CD8-positive, alpha-beta T cell (primary cell): ENCODE measurements at regions of chr4 and their contacts with region 1.

Region 1: DNA sequence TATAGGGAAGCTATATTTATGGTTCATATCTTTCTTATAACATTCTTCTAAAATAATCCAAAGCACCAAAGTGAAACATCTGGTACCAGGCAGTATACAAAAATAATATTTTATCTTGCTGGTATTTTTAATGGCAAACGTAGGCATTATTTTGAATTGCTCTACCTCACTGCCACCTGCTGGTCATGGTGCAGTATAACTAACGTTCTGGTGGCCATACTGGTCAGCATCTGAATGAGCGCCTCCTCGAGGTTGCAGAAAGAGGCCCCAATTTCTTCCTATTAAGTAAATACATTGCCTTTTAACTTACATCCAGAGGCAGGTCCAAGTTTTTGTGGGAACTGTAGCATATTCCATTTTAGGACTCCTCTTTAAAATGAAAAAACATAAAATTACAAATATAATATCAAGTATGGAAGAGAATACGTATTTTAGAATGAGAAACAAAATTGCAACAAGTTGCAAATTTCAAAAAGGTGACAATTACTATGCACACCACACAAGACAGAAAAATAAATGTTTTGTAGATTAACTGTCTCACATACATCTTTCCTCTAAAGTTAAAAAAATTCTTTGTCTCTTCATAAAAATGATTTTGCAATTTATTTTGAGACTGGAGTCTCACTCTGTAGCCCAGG is 22.9 kb upstream of the CWH43 start:
- DNase-seq: peak; percentile 53 to 88 (median 75)
- ATAC-seq: peak; percentile 99
- H3K4me3 ChIP-seq: no peak overlapping the region
- H3K4me3 Mint-ChIP-seq: no peak overlapping the region
- H3K27ac ChIP-seq: no peak overlapping the region
- H3K27ac Mint-ChIP-seq: no peak overlapping the region
- H3K4me1 ChIP-seq: no peaks in the 10 kb centered on the region
- H3K4me1 Mint-ChIP-seq: peaks cover 2% of the 10 kb centered on the region
- H3K27me3 ChIP-seq: no peaks in the 10 kb centered on the region
- H3K27me3 Mint-ChIP-seq: no peaks in the 10 kb centered on the region
- CTCF ChIP-seq: peak; percentile 99

Region 2: GRCh38 chr4:48315728-48316630 is 647.2 kb before region 1 on chr4:
- CTCF ChIA-PET with region 1: no interaction called
- POLR2A ChIA-PET with region 1: no interaction called
- intact Hi-C with region 1: loop called in 1 of 2 experiments (anchors 2 kb)
- DNase-seq: peak in 4 of 9 experiments; percentile 16 to 67 (median 38)
- ATAC-seq: no peak
- H3K4me3 ChIP-seq: no peak overlapping the region
- H3K4me3 Mint-ChIP-seq: no peak overlapping the region
- H3K27ac ChIP-seq: no peak overlapping the region
- H3K27ac Mint-ChIP-seq: no peak overlapping the region
- H3K4me1 ChIP-seq: no peaks in the 10 kb centered on the region
- H3K4me1 Mint-ChIP-seq: no peaks in the 10 kb centered on the region
- H3K27me3 ChIP-seq: no peaks in the 10 kb centered on the region
- H3K27me3 Mint-ChIP-seq: no peaks in the 10 kb centered on the region
- CTCF ChIP-seq: peak; percentile 63

Region 3: DNA sequence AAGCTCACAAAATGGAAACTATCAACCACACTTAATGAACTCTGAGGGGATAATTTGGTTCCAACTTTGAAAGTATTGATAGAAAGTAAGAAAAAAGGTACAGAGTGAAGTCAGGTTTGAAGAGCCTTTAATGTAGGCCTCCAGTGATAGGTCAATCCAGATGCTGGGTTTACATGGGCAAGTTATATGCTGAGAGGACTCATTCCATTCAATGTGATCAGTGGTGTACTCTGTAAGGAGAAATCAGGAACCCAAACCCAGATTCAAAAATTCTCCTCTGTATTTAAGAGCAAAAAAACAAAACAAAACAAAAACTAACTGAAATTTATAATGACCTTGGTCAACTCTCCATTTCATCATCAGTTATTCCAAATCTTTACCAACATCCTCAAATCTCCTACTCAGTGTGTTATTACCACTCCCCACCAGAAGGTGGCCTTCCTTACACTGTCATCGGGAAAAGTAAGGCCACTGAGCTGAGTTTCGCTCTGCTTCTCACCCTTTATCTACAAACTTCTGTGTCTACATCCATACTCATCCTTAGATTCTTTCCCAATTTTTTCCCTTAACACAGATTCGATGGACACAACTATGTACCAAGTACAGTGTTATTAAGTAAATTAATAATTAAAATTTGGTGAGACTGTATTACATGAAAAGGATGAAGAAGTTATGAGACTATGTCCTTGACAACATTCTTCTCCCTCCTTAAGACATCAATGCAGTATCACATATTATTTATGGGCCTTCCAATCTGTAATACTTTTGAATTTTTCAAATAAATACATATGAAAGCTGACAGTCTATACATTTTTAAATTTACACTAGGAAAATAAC is 384.8 kb before region 1 on chr4:
- CTCF ChIA-PET with region 1: interaction called, 82 read pairs
- POLR2A ChIA-PET with region 1: no interaction called
- intact Hi-C with region 1: loop called (anchors 1 kb)
- DNase-seq: peak in 8 of 9 experiments; percentile 9 to 78 (median 48)
- ATAC-seq: peak; percentile 98
- H3K4me3 ChIP-seq: no peak overlapping the region
- H3K4me3 Mint-ChIP-seq: no peak overlapping the region
- H3K27ac ChIP-seq: no peak overlapping the region
- H3K27ac Mint-ChIP-seq: peak overlapping the region; percentile 7
- H3K4me1 ChIP-seq: no peaks in the 10 kb centered on the region
- H3K4me1 Mint-ChIP-seq: peaks cover 3% of the 10 kb centered on the region
- H3K27me3 ChIP-seq: no peaks in the 10 kb centered on the region
- H3K27me3 Mint-ChIP-seq: no peaks in the 10 kb centered on the region
- CTCF ChIP-seq: peak; percentile 87

Region 4: DNA sequence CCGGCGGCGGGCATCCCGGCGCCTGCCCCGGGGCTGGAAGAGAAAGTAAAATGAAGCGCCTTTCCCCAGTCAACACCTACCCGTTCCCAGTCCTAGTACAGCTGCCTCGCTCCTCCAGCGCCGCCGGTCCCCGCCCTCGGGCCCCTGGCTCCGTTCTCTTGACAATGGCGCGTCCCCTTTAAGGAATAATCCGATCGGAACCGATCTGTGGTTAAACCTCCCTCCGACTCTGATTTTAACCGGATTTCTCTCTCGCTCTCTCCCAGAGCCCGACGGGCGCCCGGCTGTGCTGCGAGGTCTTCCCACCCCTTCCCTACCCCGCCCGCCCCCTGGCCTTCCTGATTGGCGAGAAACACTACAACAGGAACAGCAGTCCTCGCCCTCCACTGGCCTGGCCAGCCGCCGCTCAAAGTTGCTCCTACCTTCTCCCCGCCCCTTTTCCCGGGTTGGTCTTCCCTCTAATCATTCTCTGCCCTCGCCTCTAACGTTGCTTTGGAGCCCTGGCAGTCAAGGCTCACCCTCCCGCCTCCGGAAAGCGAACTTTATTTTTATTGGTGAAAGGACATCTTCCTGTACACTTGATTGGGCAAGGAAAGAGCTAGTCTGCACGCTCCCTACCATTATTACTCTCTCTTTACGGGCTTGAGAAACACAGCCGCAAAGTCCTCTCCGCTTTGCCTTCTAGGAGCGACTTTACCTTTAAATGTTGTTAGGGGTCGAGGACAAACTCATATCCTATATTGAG is 183.0 kb before region 1 on chr4 and contains the start of gene FRYL:
- CTCF ChIA-PET with region 1: interaction called, 5 read pairs
- POLR2A ChIA-PET with region 1: no interaction called
- intact Hi-C with region 1: loop called in 1 of 2 experiments (anchors 5 kb)
- DNase-seq: peak; percentile 94 to 99 (median 96)
- ATAC-seq: peak; percentile 85
- H3K4me3 ChIP-seq: peak within 1 kb of the TSS; percentile 57 to 80
- H3K4me3 Mint-ChIP-seq: peak within 1 kb of the TSS; percentile 91
- H3K27ac ChIP-seq: peak within 1 kb of the TSS; percentile 73 to 84
- H3K27ac Mint-ChIP-seq: peak within 1 kb of the TSS; percentile 93
- H3K4me1 ChIP-seq: peaks cover 35% of the 10 kb centered on the region
- H3K4me1 Mint-ChIP-seq: peaks cover 47% of the 10 kb centered on the region
- H3K27me3 ChIP-seq: no peaks in the 10 kb centered on the region
- H3K27me3 Mint-ChIP-seq: no peaks in the 10 kb centered on the region
- CTCF ChIP-seq: no peak
- total RNA-seq, gene FRYL: 62.9 to 66.7 TPM

Region 5: DNA sequence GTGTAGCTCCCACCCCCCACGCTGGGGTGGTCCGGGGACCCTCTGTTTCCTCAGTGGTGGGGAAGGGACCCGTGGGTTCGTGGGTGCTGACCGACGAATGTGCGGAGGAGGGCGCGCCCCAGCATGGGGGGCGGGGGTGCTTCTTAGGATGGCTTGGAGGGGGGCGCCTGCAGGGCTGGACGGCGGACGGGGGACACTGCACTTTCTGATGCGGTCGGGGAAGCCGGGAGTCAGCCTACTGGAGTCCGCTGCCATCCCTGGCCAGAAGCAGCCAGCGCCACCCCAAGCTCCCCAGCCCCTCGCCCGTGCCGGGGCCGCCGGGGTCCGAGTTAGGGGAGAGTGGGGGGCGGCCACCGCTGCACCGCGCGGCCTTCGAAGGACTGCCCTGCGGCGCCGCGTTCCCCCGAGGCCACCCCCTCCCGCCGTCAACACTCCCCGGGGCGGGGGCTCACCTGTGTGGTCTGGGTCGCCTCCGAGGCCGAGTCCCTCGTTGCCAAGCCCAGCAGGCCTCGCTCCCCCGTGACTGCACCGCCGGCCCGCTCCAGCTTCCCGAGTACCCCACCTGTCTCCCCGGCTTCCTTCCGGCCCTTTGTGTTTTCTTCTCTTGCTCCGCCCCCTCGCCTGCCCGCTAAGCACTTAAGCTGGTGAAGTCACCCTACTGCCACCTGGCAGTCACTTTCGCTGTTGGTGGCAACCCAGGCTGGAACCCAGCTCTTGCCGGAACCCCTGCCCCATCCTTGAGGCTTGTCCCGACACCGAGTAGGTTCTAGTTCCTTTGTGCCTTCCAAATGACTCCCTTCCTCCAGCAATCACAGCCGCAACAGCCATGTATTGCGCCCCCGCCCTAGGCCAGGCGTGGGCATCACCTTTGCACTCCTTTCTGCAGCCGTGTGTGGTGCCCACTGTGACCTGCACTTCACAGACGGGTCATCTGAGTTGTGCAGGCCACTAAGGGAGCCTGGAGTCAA is 56.7 kb before region 1 on chr4 and contains the start of gene OCIAD2:
- CTCF ChIA-PET with region 1: interaction called, 13 read pairs
- POLR2A ChIA-PET with region 1: no interaction called
- intact Hi-C with region 1: loop called in 1 of 2 experiments (anchors 2 kb)
- DNase-seq: peak; percentile 70 to 92 (median 89)
- ATAC-seq: peak; percentile 97
- H3K4me3 ChIP-seq: peak within 1 kb of the TSS; percentile 73 to 82
- H3K4me3 Mint-ChIP-seq: peak within 1 kb of the TSS; percentile 98
- H3K27ac ChIP-seq: peak within 1 kb of the TSS; percentile 64 to 71
- H3K27ac Mint-ChIP-seq: peak within 1 kb of the TSS; percentile 98
- H3K4me1 ChIP-seq: peaks cover 29% of the 10 kb centered on the region
- H3K4me1 Mint-ChIP-seq: peaks cover 49% of the 10 kb centered on the region
- H3K27me3 ChIP-seq: no peaks in the 10 kb centered on the region
- H3K27me3 Mint-ChIP-seq: no peaks in the 10 kb centered on the region
- CTCF ChIP-seq: peak; percentile 36
- total RNA-seq, gene OCIAD2: 70.6 to 72.1 TPM

Region 6: GRCh38 chr4:49002931-49003330 is 39.8 kb after region 1 on chr4:
- CTCF ChIA-PET with region 1: no interaction called
- POLR2A ChIA-PET with region 1: no interaction called
- intact Hi-C with region 1: no loop called
- DNase-seq: no peak
- ATAC-seq: no peak
- H3K4me3 ChIP-seq: no peak overlapping the region
- H3K4me3 Mint-ChIP-seq: no peak overlapping the region
- H3K27ac ChIP-seq: no peak overlapping the region
- H3K27ac Mint-ChIP-seq: no peak overlapping the region
- H3K4me1 ChIP-seq: no peaks in the 10 kb centered on the region
- H3K4me1 Mint-ChIP-seq: no peaks in the 10 kb centered on the region
- H3K27me3 ChIP-seq: no peaks in the 10 kb centered on the region
- H3K27me3 Mint-ChIP-seq: peaks cover 29% of the 10 kb centered on the region
- CTCF ChIP-seq: no peak